OCI-LY7 (cell line): ENCODE measurements at regions of chr1 and their contacts with region 1.

Region 1: GRCh38 chr1:66446261-66447001 is 87.5 kb upstream of the SGIP1 start:
- DNase-seq: peak; percentile 85
- H3K4me3 ChIP-seq: peak overlapping the region; percentile 38
- H3K27ac ChIP-seq: peak overlapping the region; percentile 71
- H3K4me1 ChIP-seq: peaks cover 30% of the 10 kb centered on the region
- CTCF ChIP-seq: peak; percentile 93

Region 2: DNA sequence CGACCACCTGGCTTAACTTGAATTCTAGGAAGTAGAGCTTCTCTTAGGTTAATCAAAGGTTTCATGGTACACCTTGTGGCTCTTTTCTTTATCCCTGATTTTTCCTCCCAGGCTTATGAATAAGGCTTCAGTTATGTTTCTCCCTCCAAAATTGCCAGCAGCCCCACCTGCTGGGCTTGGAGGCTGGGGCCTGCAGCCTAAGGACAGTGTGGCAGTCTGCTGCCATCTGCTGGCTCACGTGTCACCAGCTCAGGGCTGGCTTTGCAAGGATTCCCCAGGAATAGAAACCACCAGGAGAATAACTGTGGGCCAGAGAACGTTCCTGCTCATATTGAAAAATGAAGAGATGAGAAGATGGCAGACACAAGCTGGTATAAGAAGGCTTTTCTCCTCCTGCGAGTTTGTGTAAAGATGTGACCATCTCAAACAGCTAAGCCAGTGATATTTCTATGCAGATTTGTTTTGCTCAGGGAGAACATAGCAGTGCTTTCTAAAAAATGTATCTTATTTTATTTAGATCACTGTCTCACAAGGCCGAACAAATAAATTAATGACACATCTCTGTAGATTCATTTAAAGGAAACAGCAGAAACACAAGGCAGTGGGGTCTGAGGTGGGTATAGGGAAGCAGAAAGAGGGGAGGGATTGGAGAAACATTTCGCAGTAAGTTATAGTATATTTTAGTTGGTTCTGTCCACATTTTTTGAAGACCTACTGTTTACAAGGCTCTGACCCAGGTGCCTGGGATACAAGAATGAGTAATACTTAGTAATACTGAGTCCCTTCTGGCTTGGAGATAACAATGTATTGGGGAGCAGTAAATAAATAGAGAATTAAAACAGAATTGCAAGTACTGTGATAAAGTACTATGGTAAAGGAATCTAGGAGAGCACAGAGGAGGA is 203.5 kb before region 1 on chr1:
- CTCF ChIA-PET with region 1: interaction called, 9 read pairs
- POLR2A ChIA-PET with region 1: interaction called, 29 read pairs
- intact Hi-C with region 1: loop called (anchors 2 kb)
- DNase-seq: peak; percentile 86
- H3K4me3 ChIP-seq: no peak overlapping the region
- H3K27ac ChIP-seq: no peak overlapping the region
- H3K4me1 ChIP-seq: no peaks in the 10 kb centered on the region
- CTCF ChIP-seq: peak; percentile 100

Region 3: DNA sequence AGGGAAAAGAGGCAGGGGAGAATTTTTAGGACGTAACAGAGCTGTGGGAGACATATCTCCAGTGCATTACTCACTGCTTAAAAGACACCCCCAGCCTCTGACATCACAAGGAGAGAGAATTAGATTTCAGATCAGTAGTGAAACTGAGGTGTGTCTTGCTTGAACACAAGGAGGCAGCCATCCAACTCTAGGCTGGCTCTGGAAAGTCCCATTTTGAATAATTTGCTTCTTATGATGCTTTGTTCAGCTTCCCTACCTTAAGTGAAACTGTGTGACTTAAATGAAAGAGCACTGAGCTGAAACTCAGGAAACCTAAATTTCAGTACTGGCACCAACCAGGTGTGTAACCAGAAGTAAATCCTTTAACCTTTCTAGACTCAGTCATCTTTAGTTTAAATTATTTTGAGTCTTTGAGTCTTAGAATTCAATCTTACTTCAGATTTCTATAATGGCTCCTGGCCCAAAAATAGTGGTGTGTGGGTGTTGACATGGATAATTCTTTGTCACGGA is 164.0 kb before region 1 on chr1:
- CTCF ChIA-PET with region 1: interaction called, 3 read pairs
- POLR2A ChIA-PET with region 1: interaction called, 8 read pairs
- intact Hi-C with region 1: loop called (anchors 1 kb)
- DNase-seq: peak; percentile 85
- H3K4me3 ChIP-seq: peak overlapping the region; percentile 32
- H3K27ac ChIP-seq: peak overlapping the region; percentile 59
- H3K4me1 ChIP-seq: peaks cover 73% of the 10 kb centered on the region
- CTCF ChIP-seq: peak; percentile 62

Region 4: GRCh38 chr1:66342707-66343106 is 103.7 kb before region 1 on chr1:
- CTCF ChIA-PET with region 1: interaction called, 3 read pairs
- POLR2A ChIA-PET with region 1: interaction called, 17 read pairs
- intact Hi-C with region 1: no loop called
- DNase-seq: peak; percentile 70
- H3K4me3 ChIP-seq: peak overlapping the region; percentile 51
- H3K27ac ChIP-seq: peak overlapping the region; percentile 47
- H3K4me1 ChIP-seq: peaks cover 75% of the 10 kb centered on the region
- CTCF ChIP-seq: 0 out of 2 replicates have a peak, but pooled peaks have one; percentile 13

Region 5: GRCh38 chr1:66402194-66402593 is 44.2 kb before region 1 on chr1:
- CTCF ChIA-PET with region 1: interaction called, 7 read pairs
- POLR2A ChIA-PET with region 1: interaction called, 22 read pairs
- intact Hi-C with region 1: loop called (anchors 1 kb)
- DNase-seq: peak; percentile 99
- H3K4me3 ChIP-seq: peak overlapping the region; percentile 49
- H3K27ac ChIP-seq: peak overlapping the region; percentile 93
- H3K4me1 ChIP-seq: peaks cover 81% of the 10 kb centered on the region
- CTCF ChIP-seq: no peak

Region 6: DNA sequence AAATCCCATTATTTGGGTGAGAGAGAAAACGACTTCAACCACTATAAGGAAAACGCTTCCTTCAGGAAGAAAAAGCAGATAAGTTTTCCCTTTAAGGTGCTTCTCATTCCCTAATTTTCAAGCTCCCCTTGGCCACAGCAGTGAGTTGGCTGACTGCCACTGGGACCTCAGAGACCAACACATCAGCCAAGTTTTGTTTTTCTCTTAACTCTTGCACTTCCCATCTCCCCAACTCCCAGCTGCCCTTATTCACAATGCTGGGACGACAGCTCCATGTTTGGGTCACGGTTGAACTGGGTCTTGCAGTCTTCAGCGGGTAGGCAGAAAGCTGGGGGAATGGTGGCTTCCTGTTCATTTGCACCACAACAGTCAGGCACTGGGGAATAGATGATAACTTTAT is 106.4 kb after region 1 on chr1:
- CTCF ChIA-PET with region 1: no interaction called
- POLR2A ChIA-PET with region 1: no interaction called
- intact Hi-C with region 1: no loop called
- DNase-seq: no peak
- H3K4me3 ChIP-seq: no peak overlapping the region
- H3K27ac ChIP-seq: no peak overlapping the region
- H3K4me1 ChIP-seq: no peaks in the 10 kb centered on the region
- CTCF ChIP-seq: no peak